H1 (cell line): ENCODE measurements at regions of chr1 and their contacts with region 1.

Region 1: DNA sequence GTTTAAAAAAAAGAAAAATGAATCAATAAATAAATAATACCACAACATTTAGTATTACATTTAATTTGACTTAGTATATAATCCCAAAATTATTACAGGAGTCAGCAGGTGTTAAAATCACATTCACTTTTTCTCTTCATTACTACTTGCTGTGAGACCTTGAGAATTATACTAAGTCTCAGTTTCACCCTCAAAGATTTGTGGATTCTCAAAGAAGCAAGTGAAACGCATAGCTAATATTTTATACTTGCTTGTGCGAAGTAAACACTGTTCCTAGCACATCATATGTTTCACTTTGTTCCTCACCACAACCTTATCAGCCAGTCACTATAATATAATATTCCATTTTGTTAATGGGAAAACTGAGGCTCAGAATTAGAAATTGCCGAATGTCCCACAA is 4.0 kb downstream of the CLCA1 start:
- DNase-seq: no peak
- H3K4me3 ChIP-seq: no peak overlapping the region
- H3K27ac ChIP-seq: no peak overlapping the region
- H3K4me1 ChIP-seq: no peaks in the 10 kb centered on the region
- H3K27me3 ChIP-seq: no peaks in the 10 kb centered on the region
- CTCF ChIP-seq: no peak
- EP300 ChIP-seq: no peak
- POLR2A ChIP-seq: no peak
- RAD21 ChIP-seq: no peak

Region 2: DNA sequence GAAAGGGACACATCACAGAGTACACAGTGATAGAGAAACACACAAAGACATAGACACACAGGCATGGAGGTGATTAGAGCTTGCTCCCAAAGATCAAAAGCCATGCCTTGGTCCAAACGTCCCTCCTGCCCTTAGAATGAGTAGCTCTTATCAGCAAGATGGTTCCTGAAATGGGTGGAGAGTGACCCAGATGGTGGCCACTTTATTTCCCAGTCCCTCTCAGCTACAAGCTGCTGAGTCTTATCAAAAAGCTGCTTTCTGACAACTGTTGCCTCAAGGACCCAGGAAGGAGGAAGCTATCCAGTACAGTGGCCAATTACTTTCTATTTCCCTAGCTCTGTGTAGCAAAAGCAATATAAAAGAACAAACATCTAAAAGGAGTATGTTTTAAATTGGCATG is 11.8 kb before region 1 on chr1:
- CTCF ChIA-PET with region 1: interaction called, 41 read pairs
- POLR2A ChIA-PET with region 1: no interaction called
- DNase-seq: no peak
- H3K4me3 ChIP-seq: no peak overlapping the region
- H3K27ac ChIP-seq: no peak overlapping the region
- H3K4me1 ChIP-seq: no peaks in the 10 kb centered on the region
- H3K27me3 ChIP-seq: no peaks in the 10 kb centered on the region; a peak in 1 of 7 replicates
- CTCF ChIP-seq: no peak
- EP300 ChIP-seq: no peak
- POLR2A ChIP-seq: no peak
- RAD21 ChIP-seq: no peak

Region 3: GRCh38 chr1:86487131-86487810 is 14.5 kb after region 1 on chr1:
- CTCF ChIA-PET with region 1: interaction called, 49 read pairs
- POLR2A ChIA-PET with region 1: no interaction called
- DNase-seq: no peak
- H3K4me3 ChIP-seq: no peak overlapping the region
- H3K27ac ChIP-seq: no peak overlapping the region
- H3K4me1 ChIP-seq: no peaks in the 10 kb centered on the region
- H3K27me3 ChIP-seq: no peaks in the 10 kb centered on the region
- CTCF ChIP-seq: no peak
- EP300 ChIP-seq: no peak
- POLR2A ChIP-seq: no peak
- RAD21 ChIP-seq: no peak

Region 4: GRCh38 chr1:86507935-86508582 is 35.3 kb after region 1 on chr1:
- CTCF ChIA-PET with region 1: interaction called, 79 read pairs
- POLR2A ChIA-PET with region 1: interaction called, 4 read pairs
- DNase-seq: no peak
- H3K4me3 ChIP-seq: no peak overlapping the region; a peak in 1 of 8 replicates
- H3K27ac ChIP-seq: no peak overlapping the region
- H3K4me1 ChIP-seq: peaks cover 12 to 16% (median 14%) of the 10 kb centered on the region in 4 experiments
- H3K27me3 ChIP-seq: no peaks in the 10 kb centered on the region; a peak in 1 of 7 replicates
- CTCF ChIP-seq: peak in 2 of 3 experiments; percentile 58 to 59; a peak in 3 of 4 replicates
- EP300 ChIP-seq: no peak
- POLR2A ChIP-seq: no peak
- RAD21 ChIP-seq: peak; percentile 58 to 66

Region 5: GRCh38 chr1:86621286-86621685 is 148.5 kb after region 1 on chr1:
- CTCF ChIA-PET with region 1: no interaction called
- POLR2A ChIA-PET with region 1: no interaction called
- DNase-seq: no peak
- H3K4me3 ChIP-seq: no peak overlapping the region
- H3K27ac ChIP-seq: no peak overlapping the region
- H3K4me1 ChIP-seq: no peaks in the 10 kb centered on the region; a peak in 2 of 7 replicates
- H3K27me3 ChIP-seq: no peaks in the 10 kb centered on the region
- CTCF ChIP-seq: no peak
- EP300 ChIP-seq: no peak
- POLR2A ChIP-seq: no peak
- RAD21 ChIP-seq: no peak

Region 6: GRCh38 chr1:86731416-86731815 is 258.6 kb after region 1 on chr1:
- CTCF ChIA-PET with region 1: no interaction called
- POLR2A ChIA-PET with region 1: no interaction called
- DNase-seq: no peak
- H3K4me3 ChIP-seq: no peak overlapping the region
- H3K27ac ChIP-seq: no peak overlapping the region
- H3K4me1 ChIP-seq: no peaks in the 10 kb centered on the region
- H3K27me3 ChIP-seq: no peaks in the 10 kb centered on the region
- CTCF ChIP-seq: no peak
- EP300 ChIP-seq: no peak
- POLR2A ChIP-seq: no peak
- RAD21 ChIP-seq: no peak

Region 7: DNA sequence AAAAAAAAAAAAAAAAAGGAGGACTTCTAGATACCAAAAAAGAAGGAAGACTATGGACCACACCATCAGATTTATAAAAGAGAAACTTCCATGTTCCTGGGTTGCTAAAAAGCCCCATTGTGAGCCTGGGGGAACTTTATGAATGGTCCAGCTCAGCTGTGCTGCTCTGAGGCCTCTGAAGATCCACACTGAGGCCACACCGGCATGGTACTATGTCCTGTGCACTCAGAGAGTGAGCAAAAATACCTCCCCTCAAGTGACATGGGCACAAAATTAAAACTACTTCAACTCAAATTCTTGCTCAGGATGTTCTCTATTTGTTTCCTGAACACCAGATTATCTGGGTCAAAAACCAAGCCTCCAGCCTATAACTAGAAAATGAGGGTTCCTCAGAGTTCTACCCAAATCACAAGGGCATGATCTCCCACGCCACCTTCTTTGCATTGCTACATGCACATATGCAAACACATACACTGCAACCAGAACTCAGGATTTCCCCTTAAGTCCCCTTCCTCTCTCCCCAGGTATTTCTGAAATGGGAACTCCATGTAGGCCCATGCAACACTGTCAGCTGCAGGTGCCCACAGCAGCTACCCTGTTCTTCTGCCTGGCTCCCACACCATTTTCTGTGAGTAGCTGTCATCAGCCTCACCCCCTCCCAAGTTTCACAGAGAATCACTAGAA is 326.0 kb after region 1 on chr1:
- CTCF ChIA-PET with region 1: no interaction called
- POLR2A ChIA-PET with region 1: no interaction called
- DNase-seq: peak in 1 of 2 experiments; percentile 26
- H3K4me3 ChIP-seq: no peak overlapping the region
- H3K27ac ChIP-seq: no peak overlapping the region
- H3K4me1 ChIP-seq: no peaks in the 10 kb centered on the region
- H3K27me3 ChIP-seq: no peaks in the 10 kb centered on the region
- CTCF ChIP-seq: no peak
- EP300 ChIP-seq: no peak
- POLR2A ChIP-seq: no peak
- RAD21 ChIP-seq: no peak